ENCODE measurements at regions of chr1 and their contacts with region 1.

Region 1: DNA sequence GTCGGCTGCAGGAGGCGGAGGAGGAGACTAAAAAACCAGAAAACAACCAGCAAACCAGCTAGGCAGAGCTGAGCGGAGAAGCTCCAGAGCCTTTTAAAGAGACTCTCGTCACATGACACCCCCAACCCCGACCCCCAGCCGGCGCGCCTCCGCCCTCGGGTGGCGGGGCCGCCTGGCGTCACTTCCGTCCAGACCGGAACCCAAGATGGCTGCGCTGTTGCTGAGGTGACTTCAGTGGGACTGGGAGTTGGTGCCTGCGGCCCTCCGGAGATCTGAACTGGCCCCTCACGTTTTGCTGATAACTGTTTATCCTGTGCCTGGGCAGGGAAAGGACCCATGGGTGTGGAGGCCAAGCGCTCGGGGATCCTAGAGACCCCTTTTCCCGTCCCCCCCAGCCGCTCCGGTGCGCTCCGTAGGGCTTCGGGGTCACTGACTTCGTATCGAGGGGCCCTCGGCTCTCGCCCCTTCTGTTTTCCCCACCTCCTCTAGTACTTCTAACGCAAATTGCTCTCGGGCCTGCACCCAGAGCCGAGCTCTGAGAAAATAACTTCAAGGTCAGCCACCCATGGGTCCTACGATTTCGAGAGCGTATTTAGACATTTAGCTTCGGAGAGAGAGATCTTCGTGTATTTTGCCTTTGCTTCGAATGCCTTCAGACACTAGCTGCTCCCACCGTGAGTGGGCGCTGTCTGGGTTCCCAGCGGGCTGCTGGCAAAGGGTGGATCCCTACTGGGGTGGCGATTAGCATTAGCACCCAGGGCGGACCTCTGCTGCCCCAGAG is at the start of gene SDHC:
- DNase-seq: peak; percentile 95 to 97
- ATAC-seq: peak; percentile 99
- H3K4me3 ChIP-seq: peak within 1 kb of the TSS; percentile 87 to 88
- H3K27ac ChIP-seq: peak within 1 kb of the TSS; percentile 71 to 93
- H3K4me1 ChIP-seq: no peaks in the 10 kb centered on the region
- H3K27me3 ChIP-seq: no peaks in the 10 kb centered on the region
- total RNA-seq, gene SDHC: 103 to 127 TPM

Region 2: DNA sequence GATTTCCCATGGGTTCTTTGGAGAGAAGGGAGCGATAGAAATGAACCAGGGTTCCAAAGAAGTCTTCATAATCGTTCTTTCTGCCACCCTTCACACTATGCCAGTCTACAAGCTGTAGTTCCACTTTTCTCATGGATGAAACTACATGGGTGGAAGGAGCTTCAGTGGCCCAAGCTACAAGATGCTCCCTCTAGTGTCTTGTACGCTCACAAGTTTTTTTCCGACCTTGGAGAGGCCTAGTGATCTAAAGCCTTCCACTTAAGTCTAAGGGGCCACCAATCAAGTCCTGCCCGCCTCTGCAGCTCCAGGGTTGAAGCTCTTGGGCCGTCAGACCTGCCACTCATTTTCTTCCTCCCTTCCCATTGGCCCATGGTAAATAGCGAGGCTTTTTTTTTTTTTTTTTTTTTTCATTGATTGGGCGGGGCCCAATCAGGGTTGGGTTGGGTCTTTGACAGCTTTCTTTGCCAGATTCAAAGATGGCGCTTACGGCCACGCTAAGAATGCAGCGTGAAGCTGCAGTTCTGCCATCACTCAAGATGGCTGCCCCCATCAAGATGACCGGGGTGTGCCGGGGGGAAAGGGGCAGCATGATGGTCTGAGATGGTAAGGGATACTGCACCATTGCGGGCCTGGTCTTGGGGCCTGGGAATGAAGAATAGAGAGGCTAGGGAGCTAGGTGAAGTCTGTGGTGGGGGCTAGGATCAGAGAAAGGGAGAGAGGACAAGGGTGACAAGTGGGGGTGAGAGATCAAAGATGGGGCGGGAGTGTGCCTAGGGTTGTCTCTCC is 88.7 kb before region 1 on chr1 and contains the start of gene TOMM40L:
- intact Hi-C with region 1: loop called (anchors 2 to 5 kb)
- DNase-seq: peak; percentile 91 to 95
- ATAC-seq: peak; percentile 95
- H3K4me3 ChIP-seq: peak within 1 kb of the TSS; percentile 47 to 85
- H3K27ac ChIP-seq: no peak within 1 kb of the TSS
- H3K4me1 ChIP-seq: no peaks in the 10 kb centered on the region
- H3K27me3 ChIP-seq: no peaks in the 10 kb centered on the region
- total RNA-seq, gene TOMM40L: 10.0 to 12.9 TPM

Region 3: DNA sequence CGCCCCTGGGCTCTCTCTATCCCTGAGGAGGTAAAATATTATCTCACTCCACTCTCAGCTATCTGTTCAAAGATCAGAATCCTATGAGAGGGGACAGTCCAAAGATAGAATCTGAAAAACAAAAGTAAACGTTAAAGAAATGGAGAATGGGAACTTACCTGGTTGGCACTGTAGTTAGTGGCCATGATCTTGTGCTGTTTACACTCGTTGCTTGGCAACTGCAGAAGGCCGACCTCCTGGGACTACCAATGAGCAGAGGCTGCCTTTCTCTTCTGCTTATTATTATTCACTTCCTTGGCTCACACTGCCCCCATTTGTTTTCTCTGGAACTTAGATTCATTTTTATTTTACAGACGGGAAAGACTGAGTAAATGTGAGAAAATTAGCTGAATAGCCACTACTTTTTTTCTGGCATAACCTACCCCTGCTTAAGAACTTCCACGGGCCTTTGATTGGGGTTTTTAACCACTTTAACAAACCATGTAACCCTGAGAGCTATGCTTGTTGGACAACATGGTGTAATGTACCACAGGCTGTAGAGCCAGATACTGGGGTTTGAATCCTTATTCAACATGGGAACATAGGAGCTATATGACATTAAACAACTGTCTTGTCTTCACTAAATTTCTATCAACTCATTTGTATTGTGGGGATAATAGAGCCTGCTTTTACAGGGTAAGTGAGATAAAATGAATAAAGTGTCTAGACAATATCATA is 53.5 kb after region 1 on chr1 and contains the start of gene CFAP126:
- intact Hi-C with region 1: loop called in 1 of 2 experiments (anchors 2 kb)
- DNase-seq: peak in 1 of 2 donors; percentile 84
- ATAC-seq: peak; percentile 92
- H3K4me3 ChIP-seq: no peak within 1 kb of the TSS
- H3K27ac ChIP-seq: peak within 1 kb of the TSS; percentile 67 to 79
- H3K4me1 ChIP-seq: no peaks in the 10 kb centered on the region
- H3K27me3 ChIP-seq: no peaks in the 10 kb centered on the region
- total RNA-seq, gene CFAP126: not detected